CD4-positive, alpha-beta T cell (primary cell): ENCODE measurements at regions of chr4 and their contacts with region 1.

Region 1: DNA sequence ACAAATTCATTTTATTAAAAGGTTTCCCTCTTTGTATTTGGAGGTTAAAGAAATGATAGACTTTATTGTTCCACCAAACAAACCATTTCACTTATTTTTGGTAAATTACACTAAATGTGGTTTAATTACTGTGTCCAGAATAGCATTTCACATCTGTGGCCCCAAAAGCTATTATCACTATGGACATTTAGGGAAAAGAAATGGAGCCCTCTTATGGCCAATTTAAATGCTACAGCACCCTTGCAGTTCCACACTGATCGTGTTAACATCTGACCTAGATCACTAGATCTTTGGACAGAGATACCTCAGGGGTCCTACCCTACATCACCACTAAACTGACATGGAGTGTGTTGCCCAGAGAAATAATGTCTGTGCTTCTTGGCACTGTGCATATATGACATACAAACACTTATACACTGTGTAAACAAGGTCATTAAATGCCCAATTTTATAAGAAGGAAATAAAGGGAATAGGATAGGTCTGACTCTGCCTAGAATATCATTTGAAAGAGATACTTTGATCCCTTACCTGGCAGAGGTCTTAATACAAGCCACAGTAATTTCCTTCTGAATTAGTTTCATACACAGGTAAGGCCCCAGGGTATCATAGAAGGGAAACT is 163.9 kb downstream of the KDR start:
- DNase-seq: peak in 4 of 14 experiments; percentile 11 to 55 (median 32)
- ATAC-seq: peak; percentile 45
- H3K4me3 ChIP-seq: no peak overlapping the region
- H3K4me3 Mint-ChIP-seq: no peak overlapping the region
- H3K27ac ChIP-seq: no peak overlapping the region
- H3K27ac Mint-ChIP-seq: no peak overlapping the region
- H3K4me1 ChIP-seq: peaks cover 10% of the 10 kb centered on the region
- H3K4me1 Mint-ChIP-seq: peaks cover 22% of the 10 kb centered on the region
- H3K27me3 ChIP-seq: no peaks in the 10 kb centered on the region
- H3K27me3 Mint-ChIP-seq: peaks cover 6% of the 10 kb centered on the region
- CTCF ChIP-seq: peak; percentile 55

Region 2: DNA sequence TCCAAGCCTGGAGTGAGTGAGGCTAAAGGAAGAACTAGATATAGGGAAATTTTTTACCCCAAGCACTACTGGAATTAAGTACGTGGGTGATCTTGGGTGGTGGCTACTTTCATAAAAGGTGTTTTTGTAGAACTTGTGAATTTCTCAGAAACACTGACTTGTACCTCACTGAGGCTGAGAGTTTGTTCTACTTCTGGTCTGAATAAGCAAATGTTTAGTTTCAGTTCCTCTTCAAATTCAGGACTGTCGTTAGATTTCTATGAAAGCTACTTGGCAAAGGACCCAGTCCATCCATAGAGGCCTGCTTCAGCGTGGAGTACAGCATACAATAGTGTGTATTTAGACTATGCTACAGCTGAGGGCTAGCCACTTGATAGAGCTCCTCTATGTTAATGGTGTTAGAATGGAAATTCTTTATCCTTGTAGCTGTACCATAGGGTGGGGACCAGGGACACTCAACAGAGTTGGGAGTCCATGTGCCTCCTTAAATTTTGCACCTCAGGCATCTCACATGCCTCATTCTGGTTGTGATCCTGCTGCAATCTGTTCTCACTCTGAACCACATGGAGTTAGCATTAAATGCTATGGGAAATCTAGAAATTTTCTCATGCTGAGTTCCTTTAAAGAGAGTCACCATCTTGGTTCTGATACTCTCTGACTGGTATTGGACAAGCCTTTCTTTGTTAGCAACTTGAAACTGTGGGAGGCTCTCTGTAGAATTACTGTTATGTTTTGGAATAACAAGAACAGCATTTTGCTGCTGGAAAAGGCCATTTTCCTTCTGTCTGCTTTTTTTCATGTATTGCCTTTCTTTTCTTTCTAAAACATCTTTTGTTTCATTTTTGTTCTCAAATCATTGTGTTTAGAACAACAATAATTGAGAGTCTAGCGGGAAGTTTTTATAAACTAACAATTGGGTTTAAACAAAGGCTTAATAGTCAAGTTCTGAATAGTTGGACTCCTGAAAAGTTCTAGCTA is 645.6 kb before region 1 on chr4:
- CTCF ChIA-PET with region 1: no interaction called
- POLR2A ChIA-PET with region 1: no interaction called
- intact Hi-C with region 1: loop called in 1 of 2 experiments (anchors 2 kb)
- DNase-seq: peak in 1 of 14 experiments; percentile 5
- ATAC-seq: no peak
- H3K4me3 ChIP-seq: no peak overlapping the region
- H3K4me3 Mint-ChIP-seq: no peak overlapping the region
- H3K27ac ChIP-seq: no peak overlapping the region
- H3K27ac Mint-ChIP-seq: no peak overlapping the region
- H3K4me1 ChIP-seq: no peaks in the 10 kb centered on the region
- H3K4me1 Mint-ChIP-seq: no peaks in the 10 kb centered on the region
- H3K27me3 ChIP-seq: no peaks in the 10 kb centered on the region
- H3K27me3 Mint-ChIP-seq: peaks cover 11% of the 10 kb centered on the region
- CTCF ChIP-seq: no peak

Region 3: GRCh38 chr4:54322818-54323417 is 638.5 kb before region 1 on chr4:
- CTCF ChIA-PET with region 1: no interaction called
- POLR2A ChIA-PET with region 1: no interaction called
- intact Hi-C with region 1: loop called (anchors 1 to 2 kb)
- DNase-seq: peak in 13 of 14 experiments; percentile 5 to 65 (median 35)
- ATAC-seq: peak; percentile 37
- H3K4me3 ChIP-seq: no peak overlapping the region
- H3K4me3 Mint-ChIP-seq: no peak overlapping the region
- H3K27ac ChIP-seq: no peak overlapping the region
- H3K27ac Mint-ChIP-seq: no peak overlapping the region
- H3K4me1 ChIP-seq: no peaks in the 10 kb centered on the region
- H3K4me1 Mint-ChIP-seq: no peaks in the 10 kb centered on the region
- H3K27me3 ChIP-seq: no peaks in the 10 kb centered on the region
- H3K27me3 Mint-ChIP-seq: no peaks in the 10 kb centered on the region
- CTCF ChIP-seq: peak; percentile 42

Region 4: GRCh38 chr4:54384563-54384962 is 576.9 kb before region 1 on chr4:
- CTCF ChIA-PET with region 1: no interaction called
- POLR2A ChIA-PET with region 1: no interaction called
- intact Hi-C with region 1: loop called in 1 of 2 experiments (anchors 2 kb)
- DNase-seq: peak in 4 of 14 experiments; percentile 5 to 26 (median 10)
- ATAC-seq: no peak
- H3K4me3 ChIP-seq: no peak overlapping the region
- H3K4me3 Mint-ChIP-seq: no peak overlapping the region
- H3K27ac ChIP-seq: no peak overlapping the region
- H3K27ac Mint-ChIP-seq: no peak overlapping the region
- H3K4me1 ChIP-seq: no peaks in the 10 kb centered on the region
- H3K4me1 Mint-ChIP-seq: no peaks in the 10 kb centered on the region
- H3K27me3 ChIP-seq: no peaks in the 10 kb centered on the region
- H3K27me3 Mint-ChIP-seq: peaks cover 4% of the 10 kb centered on the region
- CTCF ChIP-seq: no peak

Region 5: GRCh38 chr4:54433686-54434085 is 527.8 kb before region 1 on chr4:
- CTCF ChIA-PET with region 1: no interaction called
- POLR2A ChIA-PET with region 1: no interaction called
- intact Hi-C with region 1: no loop called
- DNase-seq: no peak
- ATAC-seq: no peak
- H3K4me3 ChIP-seq: no peak overlapping the region
- H3K4me3 Mint-ChIP-seq: no peak overlapping the region
- H3K27ac ChIP-seq: no peak overlapping the region
- H3K27ac Mint-ChIP-seq: no peak overlapping the region
- H3K4me1 ChIP-seq: no peaks in the 10 kb centered on the region
- H3K4me1 Mint-ChIP-seq: no peaks in the 10 kb centered on the region
- H3K27me3 ChIP-seq: peaks cover 0 to 5% of the 10 kb centered on the region in 2 experiments
- H3K27me3 Mint-ChIP-seq: peaks cover 46% of the 10 kb centered on the region
- CTCF ChIP-seq: no peak

Region 6: DNA sequence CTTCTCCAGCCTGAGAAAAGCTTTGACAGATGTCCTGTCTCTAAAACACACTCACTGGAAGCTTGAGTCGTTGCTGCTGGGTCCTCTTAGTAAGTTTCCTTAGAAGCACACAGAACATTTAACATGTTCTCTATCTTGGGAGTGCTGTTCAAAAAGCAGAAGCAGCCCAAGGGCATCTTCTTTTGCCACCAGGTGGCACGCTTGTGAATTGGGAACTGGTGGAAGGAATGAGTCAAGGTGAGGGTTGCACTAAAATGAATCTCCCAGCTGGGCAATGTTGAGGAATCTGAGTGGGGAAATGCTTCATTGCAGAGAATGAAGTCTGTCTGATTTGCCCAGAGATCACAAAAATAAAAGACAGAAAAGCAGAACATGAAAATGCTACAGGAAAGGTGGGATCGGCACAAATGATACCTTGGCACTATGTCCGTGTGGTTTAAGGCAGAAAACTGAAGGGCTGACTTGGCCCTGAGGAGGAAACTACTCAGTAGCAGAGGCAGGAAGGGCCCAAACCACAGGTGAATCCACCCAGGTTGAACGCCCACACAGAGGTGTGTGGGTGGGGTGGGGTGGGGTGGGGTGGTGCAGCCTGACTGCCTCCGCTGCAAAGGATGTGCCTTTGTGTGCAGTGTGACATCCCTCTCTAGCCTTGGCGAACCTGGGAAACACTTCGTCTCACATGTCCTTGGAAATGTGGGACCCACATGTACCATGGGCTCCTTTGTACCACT is 277.7 kb before region 1 on chr4:
- CTCF ChIA-PET with region 1: no interaction called
- POLR2A ChIA-PET with region 1: interaction called, 3 read pairs
- intact Hi-C with region 1: loop called (anchors 1 to 2 kb)
- DNase-seq: peak; percentile 19 to 72 (median 47)
- ATAC-seq: peak; percentile 76
- H3K4me3 ChIP-seq: no peak overlapping the region
- H3K4me3 Mint-ChIP-seq: peak overlapping the region; percentile 69
- H3K27ac ChIP-seq: no peak overlapping the region
- H3K27ac Mint-ChIP-seq: peak overlapping the region; percentile 45
- H3K4me1 ChIP-seq: peaks cover 20% of the 10 kb centered on the region
- H3K4me1 Mint-ChIP-seq: peaks cover 29% of the 10 kb centered on the region
- H3K27me3 ChIP-seq: no peaks in the 10 kb centered on the region
- H3K27me3 Mint-ChIP-seq: no peaks in the 10 kb centered on the region
- CTCF ChIP-seq: peak; percentile 58

Region 7: GRCh38 chr4:54719378-54719777 is 242.1 kb before region 1 on chr4:
- CTCF ChIA-PET with region 1: no interaction called
- POLR2A ChIA-PET with region 1: no interaction called
- intact Hi-C with region 1: no loop called
- DNase-seq: no peak
- ATAC-seq: no peak
- H3K4me3 ChIP-seq: no peak overlapping the region
- H3K4me3 Mint-ChIP-seq: no peak overlapping the region
- H3K27ac ChIP-seq: no peak overlapping the region
- H3K27ac Mint-ChIP-seq: no peak overlapping the region
- H3K4me1 ChIP-seq: no peaks in the 10 kb centered on the region
- H3K4me1 Mint-ChIP-seq: no peaks in the 10 kb centered on the region
- H3K27me3 ChIP-seq: no peaks in the 10 kb centered on the region
- H3K27me3 Mint-ChIP-seq: no peaks in the 10 kb centered on the region
- CTCF ChIP-seq: no peak

Region 8: GRCh38 chr4:54941994-54942552 is 19.4 kb before region 1 on chr4:
- CTCF ChIA-PET with region 1: interaction called, 5 read pairs
- POLR2A ChIA-PET with region 1: interaction called, 14 read pairs
- intact Hi-C with region 1: loop called in 1 of 2 experiments (anchors 2 kb)
- DNase-seq: peak; percentile 28 to 71 (median 48)
- ATAC-seq: peak; percentile 65
- H3K4me3 ChIP-seq: peak overlapping the region; percentile 35
- H3K4me3 Mint-ChIP-seq: peak overlapping the region; percentile 72
- H3K27ac ChIP-seq: peak overlapping the region; percentile 49 to 71
- H3K27ac Mint-ChIP-seq: peak overlapping the region; percentile 97
- H3K4me1 ChIP-seq: peaks cover 28% of the 10 kb centered on the region
- H3K4me1 Mint-ChIP-seq: peaks cover 72% of the 10 kb centered on the region
- H3K27me3 ChIP-seq: no peaks in the 10 kb centered on the region
- H3K27me3 Mint-ChIP-seq: no peaks in the 10 kb centered on the region
- CTCF ChIP-seq: no peak

Region 9: DNA sequence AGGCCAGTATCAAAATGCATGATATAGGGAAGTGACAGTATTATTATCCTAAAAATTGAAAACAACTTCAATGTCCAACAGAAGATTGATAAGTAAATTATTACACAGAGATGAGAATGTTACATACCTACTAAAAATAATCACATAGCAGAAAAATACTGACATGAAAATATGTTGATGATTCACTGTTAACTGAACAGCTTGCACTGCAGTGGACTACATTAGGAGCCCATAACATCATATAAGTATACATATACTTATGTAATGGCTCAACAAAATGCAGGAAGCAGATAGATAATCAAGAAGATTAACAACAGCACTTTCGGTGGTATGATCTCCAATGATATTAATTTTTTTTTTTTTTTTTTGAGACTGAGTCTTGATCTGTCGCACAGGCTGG is 578.2 kb after region 1 on chr4:
- CTCF ChIA-PET with region 1: no interaction called
- POLR2A ChIA-PET with region 1: no interaction called
- intact Hi-C with region 1: no loop called
- DNase-seq: no peak
- ATAC-seq: no peak
- H3K4me3 ChIP-seq: no peak overlapping the region
- H3K4me3 Mint-ChIP-seq: no peak overlapping the region
- H3K27ac ChIP-seq: no peak overlapping the region
- H3K27ac Mint-ChIP-seq: no peak overlapping the region
- H3K4me1 ChIP-seq: peaks cover 12% of the 10 kb centered on the region
- H3K4me1 Mint-ChIP-seq: peaks cover 53% of the 10 kb centered on the region
- H3K27me3 ChIP-seq: no peaks in the 10 kb centered on the region
- H3K27me3 Mint-ChIP-seq: no peaks in the 10 kb centered on the region
- CTCF ChIP-seq: no peak

Region 10: GRCh38 chr4:55554453-55555030 is 593.1 kb after region 1 on chr4:
- CTCF ChIA-PET with region 1: no interaction called
- POLR2A ChIA-PET with region 1: no interaction called
- intact Hi-C with region 1: loop called in 1 of 2 experiments (anchors 5 kb)
- DNase-seq: peak in 4 of 14 experiments; percentile 10 to 65 (median 62)
- ATAC-seq: peak; percentile 55
- H3K4me3 ChIP-seq: no peak overlapping the region
- H3K4me3 Mint-ChIP-seq: no peak overlapping the region
- H3K27ac ChIP-seq: no peak overlapping the region
- H3K27ac Mint-ChIP-seq: no peak overlapping the region
- H3K4me1 ChIP-seq: no peaks in the 10 kb centered on the region
- H3K4me1 Mint-ChIP-seq: no peaks in the 10 kb centered on the region
- H3K27me3 ChIP-seq: no peaks in the 10 kb centered on the region
- H3K27me3 Mint-ChIP-seq: peaks cover 4% of the 10 kb centered on the region
- CTCF ChIP-seq: peak; percentile 78